IMR-90 (cell line): ENCODE measurements at regions of chr17 and their contacts with region 1.

Region 1: GRCh38 chr17:75779231-75779986 is 5.2 kb upstream of the UNK start:
- DNase-seq: peak; percentile 100
- ATAC-seq: peak; percentile 75
- H3K4me3 ChIP-seq: peak overlapping the region; percentile 62
- H3K27ac ChIP-seq: peak overlapping the region; percentile 86
- H3K4me1 ChIP-seq: peaks cover 6% of the 10 kb centered on the region
- H3K27me3 ChIP-seq: no peaks in the 10 kb centered on the region
- CTCF ChIP-seq: no peak
- POLR2A ChIP-seq: peak; percentile 100
- RAD21 ChIP-seq: no peak

Region 2: GRCh38 chr17:75764711-75765421 is 14.5 kb before region 1 on chr17 and contains the start of gene GALK1:
- CTCF ChIA-PET with region 1: interaction called, 5 read pairs
- POLR2A ChIA-PET with region 1: interaction called, 12 read pairs
- dilution Hi-C with region 1: no loop called
- in situ Hi-C with region 1: no loop called
- intact Hi-C with region 1: no loop called
- DNase-seq: peak; percentile 55
- ATAC-seq: peak; percentile 92
- H3K4me3 ChIP-seq: peak within 1 kb of the TSS; percentile 55
- H3K27ac ChIP-seq: peak within 1 kb of the TSS; percentile 25; the same call in 1 of the 2 replicates
- H3K4me1 ChIP-seq: peaks cover 7% of the 10 kb centered on the region
- H3K27me3 ChIP-seq: no peaks in the 10 kb centered on the region
- CTCF ChIP-seq: peak; percentile 61
- POLR2A ChIP-seq: peak; percentile 28; the same call in 1 of the 2 replicates
- RAD21 ChIP-seq: peak; percentile 47
- total RNA-seq, gene GALK1: 18.9 and 21.9 TPM in 2 replicates

Region 3: DNA sequence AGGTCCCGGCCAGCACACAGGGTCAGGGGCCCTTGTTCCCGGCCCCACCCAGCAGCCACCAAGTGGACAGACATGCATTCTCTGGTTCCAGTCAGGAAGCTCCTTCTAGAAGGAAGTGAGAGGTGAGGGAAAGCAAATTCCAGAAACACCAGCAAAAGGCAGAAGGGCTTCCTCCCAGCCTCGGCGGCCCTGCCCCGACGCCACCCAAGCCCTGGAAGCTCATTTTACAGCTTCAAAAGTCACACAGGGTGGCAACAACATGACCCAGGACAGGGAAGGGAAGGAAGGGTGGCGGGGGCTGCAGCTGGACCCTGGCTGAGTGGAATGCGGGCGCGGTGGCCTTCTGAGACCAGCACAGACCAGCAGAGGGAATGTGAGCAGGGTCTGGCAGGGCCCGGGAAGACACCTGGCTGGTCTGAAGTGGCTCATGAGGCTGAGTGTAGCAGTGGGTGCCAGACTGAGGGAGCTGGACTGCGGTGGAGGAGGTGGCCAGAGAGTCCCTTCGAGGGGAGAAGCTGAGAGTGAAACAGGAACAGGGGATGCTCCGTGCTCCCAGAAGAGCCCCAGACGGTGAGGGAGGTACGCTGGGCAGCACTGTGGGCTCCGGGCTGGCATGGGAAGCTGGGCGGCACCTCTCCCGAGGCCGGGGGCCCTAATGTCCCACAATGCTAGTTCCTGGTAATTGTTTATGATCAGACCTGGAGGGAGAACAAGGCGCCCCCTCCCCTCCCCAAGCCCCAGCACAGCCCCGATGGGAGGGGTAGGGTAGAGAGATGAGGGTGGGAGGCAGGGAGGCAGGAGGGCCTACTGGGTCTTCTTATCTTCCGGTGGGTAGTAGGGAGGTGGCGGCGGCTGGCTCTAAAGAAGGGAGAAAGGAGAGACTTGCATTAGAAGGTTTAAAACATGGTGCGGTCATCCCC is 66.8 kb after region 1 on chr17:
- CTCF ChIA-PET with region 1: no interaction called
- POLR2A ChIA-PET with region 1: no interaction called
- dilution Hi-C with region 1: no loop called
- in situ Hi-C with region 1: no loop called
- intact Hi-C with region 1: no loop called
- DNase-seq: no peak
- ATAC-seq: no peak
- H3K4me3 ChIP-seq: no peak overlapping the region
- H3K27ac ChIP-seq: no peak overlapping the region
- H3K4me1 ChIP-seq: peaks cover 6% of the 10 kb centered on the region
- H3K27me3 ChIP-seq: no peaks in the 10 kb centered on the region
- CTCF ChIP-seq: no peak
- POLR2A ChIP-seq: no peak
- RAD21 ChIP-seq: no peak

Region 4: GRCh38 chr17:75864448-75864871 is 85.1 kb after region 1 on chr17:
- CTCF ChIA-PET with region 1: interaction called, 3 read pairs
- POLR2A ChIA-PET with region 1: interaction called, 13 read pairs
- dilution Hi-C with region 1: no loop called
- in situ Hi-C with region 1: no loop called
- intact Hi-C with region 1: no loop called
- DNase-seq: peak; percentile 92
- ATAC-seq: peak; percentile 83
- H3K4me3 ChIP-seq: no peak overlapping the region
- H3K27ac ChIP-seq: peak overlapping the region; percentile 39
- H3K4me1 ChIP-seq: peaks cover 12% of the 10 kb centered on the region
- H3K27me3 ChIP-seq: no peaks in the 10 kb centered on the region
- CTCF ChIP-seq: no peak
- POLR2A ChIP-seq: no peak
- RAD21 ChIP-seq: peak; percentile 2; the same call in 1 of the 2 replicates